Activated CD4-positive, alpha-beta memory T cell treated with anti-CD3 and anti-CD28 coated beads for 36 hours (primary cell): ENCODE measurements at regions of chr4 and their contacts with region 1.

Region 1: GRCh38 chr4:114907568-114907967 is 205.9 kb downstream of the NDST4 start:
- DNase-seq: no peak
- H3K4me3 Mint-ChIP-seq: no peak overlapping the region
- H3K27ac Mint-ChIP-seq: no peak overlapping the region
- H3K4me1 Mint-ChIP-seq: no peaks in the 10 kb centered on the region
- H3K27me3 Mint-ChIP-seq: no peaks in the 10 kb centered on the region

Region 2: GRCh38 chr4:114879916-114880669 is 27.5 kb before region 1 on chr4:
- CTCF ChIA-PET with region 1: no interaction called
- POLR2A ChIA-PET with region 1: no interaction called
- intact Hi-C with region 1: loop called (anchors 1 kb)
- DNase-seq: no peak
- H3K4me3 Mint-ChIP-seq: no peak overlapping the region
- H3K27ac Mint-ChIP-seq: no peak overlapping the region
- H3K4me1 Mint-ChIP-seq: no peaks in the 10 kb centered on the region
- H3K27me3 Mint-ChIP-seq: no peaks in the 10 kb centered on the region

Region 3: DNA sequence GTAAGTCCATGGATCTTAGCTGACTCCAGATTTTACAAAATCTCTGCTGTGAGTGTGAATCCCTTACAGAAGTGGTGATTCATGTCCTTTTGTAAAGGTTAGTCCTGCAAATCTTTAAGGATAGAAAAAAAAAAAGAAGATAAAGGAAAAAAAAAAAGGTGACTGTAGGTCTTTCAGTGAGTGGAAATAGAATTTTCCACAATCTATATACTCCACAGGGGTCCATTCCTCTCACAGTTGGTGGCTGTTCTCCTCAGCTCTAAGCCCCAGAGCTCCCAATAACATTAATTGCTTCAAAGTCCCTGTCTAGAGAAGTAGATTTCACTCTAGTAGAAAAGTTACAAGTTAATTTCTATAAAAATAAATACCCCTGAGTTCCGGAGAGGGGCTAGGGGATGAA is 16.7 kb after region 1 on chr4:
- CTCF ChIA-PET with region 1: no interaction called
- POLR2A ChIA-PET with region 1: no interaction called
- intact Hi-C with region 1: no loop called
- DNase-seq: no peak
- H3K4me3 Mint-ChIP-seq: no peak overlapping the region
- H3K27ac Mint-ChIP-seq: no peak overlapping the region
- H3K4me1 Mint-ChIP-seq: no peaks in the 10 kb centered on the region
- H3K27me3 Mint-ChIP-seq: no peaks in the 10 kb centered on the region

Region 4: DNA sequence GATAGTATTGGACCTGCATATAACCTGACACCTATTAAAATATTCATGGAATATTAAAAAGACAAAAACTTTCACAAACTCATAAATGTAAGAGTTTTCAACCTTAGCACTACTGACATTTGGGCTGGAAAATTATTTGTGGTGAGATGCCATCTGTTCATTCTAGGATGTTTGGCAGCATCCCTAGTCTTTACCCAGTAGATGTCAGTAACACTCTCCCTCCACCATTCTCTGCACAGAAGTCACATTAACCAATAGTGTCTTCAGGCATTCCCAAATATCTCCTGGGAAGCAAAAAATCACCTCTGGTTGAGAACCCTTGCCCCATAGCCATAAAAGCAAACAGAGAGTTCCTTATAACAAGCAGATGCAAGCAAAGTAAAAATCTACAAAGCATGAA is 247.3 kb after region 1 on chr4:
- CTCF ChIA-PET with region 1: no interaction called
- POLR2A ChIA-PET with region 1: no interaction called
- intact Hi-C with region 1: no loop called
- DNase-seq: no peak
- H3K4me3 Mint-ChIP-seq: no peak overlapping the region
- H3K27ac Mint-ChIP-seq: no peak overlapping the region
- H3K4me1 Mint-ChIP-seq: no peaks in the 10 kb centered on the region
- H3K27me3 Mint-ChIP-seq: no peaks in the 10 kb centered on the region